Naive thymus-derived CD4-positive, alpha-beta T cell (primary cell): ENCODE measurements at regions of chr20 and their contacts with region 1.

Region 1: DNA sequence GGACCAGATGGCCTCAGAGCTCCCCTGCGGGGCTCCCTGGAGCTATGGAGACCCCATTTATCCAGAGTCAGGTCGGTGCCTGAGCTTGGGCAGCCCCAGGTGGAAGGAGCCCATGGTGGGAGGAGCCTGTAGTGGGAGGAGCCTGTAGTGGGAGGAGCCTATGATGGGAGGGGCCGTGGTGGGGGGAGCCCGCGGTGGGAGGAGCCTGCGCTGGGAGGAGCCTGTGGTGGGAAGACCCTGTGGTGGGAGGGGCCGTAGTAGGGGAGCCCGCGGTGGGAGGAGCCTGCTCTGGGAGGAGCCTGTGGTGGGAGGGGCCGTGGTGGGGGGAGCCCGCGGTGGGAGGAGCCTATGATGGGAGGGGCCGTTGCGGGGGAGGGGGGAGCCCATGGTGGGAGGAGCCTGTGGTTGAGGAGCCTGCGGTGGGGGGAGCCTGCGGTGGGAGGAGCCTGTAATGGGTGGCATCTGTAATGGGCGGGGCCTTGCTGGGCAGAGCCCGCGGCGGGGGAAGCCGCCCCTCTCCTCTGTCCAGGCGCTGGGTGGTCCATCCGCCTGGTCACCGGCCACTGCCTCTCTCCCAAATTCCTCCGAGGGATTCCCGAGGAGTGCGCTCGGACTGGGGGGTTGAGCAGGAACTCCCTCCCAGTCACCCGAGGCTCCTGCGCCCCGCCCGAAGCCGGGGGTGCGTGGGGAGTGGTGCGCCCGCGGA is 579 bp upstream of the FNDC11 start:
- DNase-seq: peak; percentile 81 to 96 (median 88)
- ATAC-seq: peak; percentile 92
- H3K4me3 ChIP-seq: peak overlapping the region; percentile 68
- H3K4me3 Mint-ChIP-seq: peak overlapping the region; percentile 70 to 85 (median 76)
- H3K27ac ChIP-seq: peak overlapping the region; percentile 70
- H3K27ac Mint-ChIP-seq: peak overlapping the region; percentile 62 to 97 (median 92)
- H3K4me1 ChIP-seq: peaks cover 13 to 21% of the 10 kb centered on the region in 2 donors
- H3K4me1 Mint-ChIP-seq: peaks cover 9 to 18% (median 13%) of the 10 kb centered on the region in 7 donors
- H3K27me3 ChIP-seq: no peaks in the 10 kb centered on the region
- H3K27me3 Mint-ChIP-seq: peaks cover 0 to 19% (median 5%) of the 10 kb centered on the region in 5 donors

Region 2: GRCh38 chr20:63520504-63520933 is 32.9 kb before region 1 on chr20 and contains the start of gene PPDPF:
- CTCF ChIA-PET with region 1: no interaction called
- POLR2A ChIA-PET with region 1: interaction called, 5 read pairs
- intact Hi-C with region 1: loop called (anchors 1 kb)
- DNase-seq: peak; percentile 76 to 92 (median 84)
- ATAC-seq: peak; percentile 96
- H3K4me3 ChIP-seq: peak within 1 kb of the TSS; percentile 86
- H3K4me3 Mint-ChIP-seq: peak within 1 kb of the TSS; percentile 65 to 89 (median 81)
- H3K27ac ChIP-seq: peak within 1 kb of the TSS; percentile 88
- H3K27ac Mint-ChIP-seq: peak within 1 kb of the TSS in 7 of 9 donors; percentile 51 to 88 (median 79)
- H3K4me1 ChIP-seq: peaks cover 11 to 14% of the 10 kb centered on the region in 2 donors
- H3K4me1 Mint-ChIP-seq: peaks cover 4 to 22% (median 9%) of the 10 kb centered on the region in 7 donors
- H3K27me3 ChIP-seq: no peaks in the 10 kb centered on the region
- H3K27me3 Mint-ChIP-seq: peaks cover 0 to 7% (median 0%) of the 10 kb centered on the region in 5 donors
- total RNA-seq, gene PPDPF: 138 to 225 (median 184) TPM

Region 3: DNA sequence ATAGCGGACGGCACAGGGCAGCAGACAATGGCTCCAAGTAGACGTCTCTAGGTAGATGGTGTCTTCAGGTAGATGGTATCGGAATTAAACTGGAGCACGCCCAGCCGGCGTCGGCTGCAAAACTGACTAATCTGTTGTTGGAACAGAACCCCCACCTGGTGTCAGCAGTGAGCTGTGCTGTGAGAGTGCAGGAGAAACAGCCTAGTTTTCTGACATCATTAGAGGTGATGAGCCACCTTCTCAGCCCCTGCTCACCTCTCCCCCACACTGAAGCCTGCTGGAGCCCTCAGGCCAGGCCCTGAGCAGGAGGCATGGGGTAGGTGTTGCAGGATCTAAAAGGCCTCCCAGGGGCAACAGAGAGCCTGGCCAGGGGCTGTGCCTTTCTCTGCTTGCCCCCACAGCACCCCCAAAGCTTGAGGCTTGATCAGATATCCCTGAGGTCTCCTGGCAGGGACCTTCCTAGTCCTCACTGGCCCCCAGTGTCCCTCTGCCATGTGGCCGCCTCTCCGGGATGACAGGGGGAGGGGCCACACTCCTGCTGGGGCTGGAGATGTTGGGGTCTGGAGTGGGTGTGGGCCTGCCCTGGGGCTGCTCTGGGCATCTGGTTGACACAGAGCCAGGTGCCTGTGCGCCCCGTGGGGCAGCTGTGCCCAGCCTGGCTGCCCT is 27.5 kb after region 1 on chr20:
- CTCF ChIA-PET with region 1: no interaction called
- POLR2A ChIA-PET with region 1: interaction called, 3 read pairs
- intact Hi-C with region 1: loop called in 1 of 2 experiments (anchors 2 kb)
- DNase-seq: peak; percentile 30 to 87 (median 81)
- ATAC-seq: peak; percentile 96
- H3K4me3 ChIP-seq: no peak overlapping the region
- H3K4me3 Mint-ChIP-seq: peak overlapping the region in 1 of 10 donors; percentile 17
- H3K27ac ChIP-seq: no peak overlapping the region
- H3K27ac Mint-ChIP-seq: peak overlapping the region in 1 of 9 donors; percentile 74
- H3K4me1 ChIP-seq: peaks cover 0 to 10% of the 10 kb centered on the region in 2 donors
- H3K4me1 Mint-ChIP-seq: peaks cover 0 to 17% (median 14%) of the 10 kb centered on the region in 7 donors
- H3K27me3 ChIP-seq: no peaks in the 10 kb centered on the region
- H3K27me3 Mint-ChIP-seq: peaks cover 0 to 42% (median 0%) of the 10 kb centered on the region in 5 donors

Region 4: GRCh38 chr20:63641792-63642544 is 88.6 kb after region 1 on chr20:
- CTCF ChIA-PET with region 1: no interaction called
- POLR2A ChIA-PET with region 1: interaction called, 9 read pairs
- intact Hi-C with region 1: loop called (anchors 1 kb)
- DNase-seq: peak; percentile 94 to 98 (median 97)
- ATAC-seq: peak; percentile 86
- H3K4me3 ChIP-seq: peak overlapping the region; percentile 89
- H3K4me3 Mint-ChIP-seq: peak overlapping the region; percentile 57 to 92 (median 76)
- H3K27ac ChIP-seq: peak overlapping the region; percentile 90
- H3K27ac Mint-ChIP-seq: peak overlapping the region; percentile 66 to 98 (median 85)
- H3K4me1 ChIP-seq: peaks cover 23 to 24% of the 10 kb centered on the region in 2 donors
- H3K4me1 Mint-ChIP-seq: peaks cover 16 to 41% (median 28%) of the 10 kb centered on the region in 7 donors
- H3K27me3 ChIP-seq: no peaks in the 10 kb centered on the region
- H3K27me3 Mint-ChIP-seq: peaks cover 0 to 2% (median 0%) of the 10 kb centered on the region in 5 donors

Region 5: DNA sequence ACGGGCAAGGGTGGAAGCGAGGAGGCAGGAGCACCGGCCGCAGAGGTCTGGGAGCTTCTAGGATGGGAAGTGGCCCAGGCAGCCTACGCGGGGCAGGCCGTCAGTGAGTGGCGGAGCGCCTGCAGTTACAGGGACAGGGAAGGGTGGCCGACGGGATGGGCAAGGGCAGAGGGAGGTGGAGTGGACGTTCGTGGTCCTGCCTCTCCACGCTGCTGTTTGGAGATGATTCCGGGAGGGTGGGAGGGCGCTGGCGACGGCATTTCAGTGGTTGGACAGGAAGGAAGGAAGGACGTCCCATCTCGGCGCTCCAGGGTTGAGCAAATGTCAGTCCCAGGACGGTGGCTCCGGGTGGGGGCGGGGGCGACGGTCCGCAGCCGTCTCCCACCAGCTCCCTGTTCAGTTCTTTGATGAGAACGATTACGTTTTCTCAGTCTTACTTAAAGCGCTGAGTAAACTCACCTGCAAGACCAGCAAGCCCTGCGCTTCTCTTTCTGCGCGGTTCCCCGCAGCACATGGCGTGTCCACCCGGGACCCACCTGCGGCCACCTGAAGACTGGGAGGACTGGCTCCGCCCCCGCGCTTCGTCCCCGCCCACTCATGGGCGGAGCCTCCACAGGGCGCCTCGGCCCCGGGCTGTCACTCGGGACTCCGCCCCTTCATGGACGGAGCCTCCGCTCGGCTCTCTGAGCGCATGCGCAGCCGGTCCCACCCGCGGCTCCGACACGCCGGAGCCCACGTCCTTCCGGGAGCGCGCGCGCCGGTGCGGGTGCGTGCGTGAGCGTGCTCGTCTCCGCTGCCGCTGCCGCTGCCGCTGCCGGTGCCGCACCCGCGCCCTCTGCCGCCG is 341.2 kb after region 1 on chr20 and contains the start of gene DNAJC5:
- CTCF ChIA-PET with region 1: no interaction called
- POLR2A ChIA-PET with region 1: no interaction called
- intact Hi-C with region 1: loop called in 1 of 2 experiments (anchors 1 kb)
- DNase-seq: peak; percentile 96 to 99 (median 98)
- ATAC-seq: peak; percentile 95
- H3K4me3 ChIP-seq: peak within 1 kb of the TSS; percentile 56
- H3K4me3 Mint-ChIP-seq: peak within 1 kb of the TSS; percentile 86 to 99 (median 96)
- H3K27ac ChIP-seq: peak within 1 kb of the TSS; percentile 94
- H3K27ac Mint-ChIP-seq: peak within 1 kb of the TSS; percentile 94 to 98 (median 97)
- H3K4me1 ChIP-seq: peaks cover 21% of the 10 kb centered on the region in 2 donors
- H3K4me1 Mint-ChIP-seq: peaks cover 34 to 49% (median 43%) of the 10 kb centered on the region in 7 donors
- H3K27me3 ChIP-seq: no peaks in the 10 kb centered on the region
- H3K27me3 Mint-ChIP-seq: peaks cover 0 to 2% (median 0%) of the 10 kb centered on the region in 5 donors
- total RNA-seq, gene DNAJC5: 35.5 to 56.8 (median 50.3) TPM